ENCODE measurements at regions of chr22 and their contacts with region 1.

Region 1: DNA sequence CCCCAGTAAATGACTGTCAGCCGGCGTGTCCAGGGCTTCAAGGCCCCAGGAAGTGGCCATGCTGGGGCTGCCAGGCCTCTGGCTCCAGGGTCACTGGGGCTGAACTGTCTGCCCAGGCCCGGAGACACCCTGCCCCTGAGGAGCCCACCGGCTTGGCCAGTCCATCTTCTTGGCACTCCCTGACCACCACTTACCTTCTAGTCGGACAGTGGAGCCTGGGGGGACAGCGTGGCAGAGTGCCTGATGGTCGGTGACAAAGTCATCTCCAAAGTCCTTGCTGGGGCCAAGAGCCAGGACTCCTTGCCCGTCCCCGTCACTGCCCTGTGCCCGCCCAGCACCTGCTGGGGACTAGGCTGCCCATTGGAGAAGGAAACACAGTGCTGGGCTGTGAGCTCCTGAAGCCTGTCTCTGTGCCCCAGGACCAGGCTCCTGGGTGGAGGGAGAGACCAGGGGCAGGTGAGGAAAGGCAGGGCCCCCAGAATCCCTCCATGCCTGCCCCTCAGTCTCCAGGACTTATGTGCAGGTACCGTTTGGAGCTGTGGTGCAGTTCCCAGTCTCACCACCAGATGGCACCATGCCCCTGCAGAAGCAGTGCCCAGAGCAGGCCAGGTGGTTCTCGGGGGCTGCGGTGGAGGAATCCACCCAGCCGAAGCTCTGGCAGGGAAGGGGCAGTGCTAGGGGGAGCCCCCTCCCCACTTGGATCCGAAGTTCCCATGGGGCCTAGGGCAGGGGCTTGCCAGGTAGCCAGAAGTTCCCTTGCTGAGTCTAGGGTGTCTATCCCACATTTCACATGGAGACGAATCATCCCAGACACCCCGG is 6.0 kb upstream of the CCDC188 start:
- DNase-seq: peak; percentile 52
- ATAC-seq: peak; percentile 85
- H3K4me3 ChIP-seq: no peak overlapping the region
- H3K27ac ChIP-seq: no peak overlapping the region
- H3K4me1 ChIP-seq: no peaks in the 10 kb centered on the region
- H3K27me3 ChIP-seq: no peaks in the 10 kb centered on the region
- CTCF ChIP-seq: peak; percentile 94 to 98 (median 98)
- POLR2A ChIP-seq: no peak
- RAD21 ChIP-seq: peak; percentile 99

Region 2: GRCh38 chr22:19738664-19739447 is 418.0 kb before region 1 on chr22:
- CTCF ChIA-PET with region 1: no interaction called
- POLR2A ChIA-PET with region 1: no interaction called
- RAD21 ChIA-PET with region 1: no interaction called
- intact Hi-C with region 1: no loop called
- DNase-seq: no peak
- ATAC-seq: no peak
- H3K4me3 ChIP-seq: no peak overlapping the region
- H3K27ac ChIP-seq: no peak overlapping the region
- H3K4me1 ChIP-seq: no peaks in the 10 kb centered on the region
- H3K27me3 ChIP-seq: no peaks in the 10 kb centered on the region
- CTCF ChIP-seq: no peak
- POLR2A ChIP-seq: no peak
- RAD21 ChIP-seq: no peak

Region 3: GRCh38 chr22:20174785-20175596 is 18.2 kb after region 1 on chr22:
- CTCF ChIA-PET with region 1: no interaction called
- POLR2A ChIA-PET with region 1: no interaction called
- RAD21 ChIA-PET with region 1: no interaction called
- intact Hi-C with region 1: no loop called
- DNase-seq: no peak
- ATAC-seq: peak; percentile 76
- H3K4me3 ChIP-seq: no peak overlapping the region
- H3K27ac ChIP-seq: no peak overlapping the region
- H3K4me1 ChIP-seq: no peaks in the 10 kb centered on the region; a peak in 1 of 4 replicates
- H3K27me3 ChIP-seq: no peaks in the 10 kb centered on the region
- CTCF ChIP-seq: peak; percentile 34 to 38 (median 37); a peak in 4 of 6 replicates
- POLR2A ChIP-seq: no peak
- RAD21 ChIP-seq: peak; percentile 59

Region 4: GRCh38 chr22:20238536-20238900 is 81.7 kb after region 1 on chr22:
- CTCF ChIA-PET with region 1: interaction called, 20 read pairs
- POLR2A ChIA-PET with region 1: no interaction called
- RAD21 ChIA-PET with region 1: interaction called, 8 read pairs
- intact Hi-C with region 1: loop called (anchors 1 kb)
- DNase-seq: peak; percentile 13
- ATAC-seq: peak; percentile 96
- H3K4me3 ChIP-seq: no peak overlapping the region
- H3K27ac ChIP-seq: no peak overlapping the region
- H3K4me1 ChIP-seq: peaks cover 4% of the 10 kb centered on the region in 2 experiments; a peak in 3 of 4 replicates
- H3K27me3 ChIP-seq: no peaks in the 10 kb centered on the region
- CTCF ChIP-seq: peak; percentile 66 to 81 (median 77); a peak in 5 of 6 replicates
- POLR2A ChIP-seq: no peak
- RAD21 ChIP-seq: peak; percentile 86

Region 5: DNA sequence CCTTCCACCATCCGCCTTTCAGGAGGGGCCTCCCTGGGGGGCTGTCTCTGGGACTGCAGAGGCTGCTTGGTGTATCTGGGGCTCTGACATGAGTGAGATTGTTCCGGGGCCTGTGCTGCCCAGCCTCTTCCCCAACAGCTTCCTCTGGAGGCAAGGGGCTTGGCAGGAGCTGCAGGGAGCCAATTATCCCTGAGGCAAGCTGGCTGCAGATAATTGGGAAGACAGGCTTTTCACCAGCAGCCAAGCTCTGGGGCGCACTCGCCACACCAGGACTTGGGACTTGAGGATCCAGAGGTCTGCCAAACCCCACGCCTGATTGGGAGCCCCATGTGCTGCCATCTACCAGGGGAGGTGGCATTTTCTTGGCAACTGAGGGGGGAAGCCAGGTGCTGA is 126.8 kb after region 1 on chr22:
- CTCF ChIA-PET with region 1: interaction called, 13 read pairs
- POLR2A ChIA-PET with region 1: no interaction called
- RAD21 ChIA-PET with region 1: interaction called in 1 of 2 experiments, 6 read pairs
- intact Hi-C with region 1: loop called (anchors 1 kb)
- DNase-seq: no peak
- ATAC-seq: no peak
- H3K4me3 ChIP-seq: no peak overlapping the region
- H3K27ac ChIP-seq: no peak overlapping the region
- H3K4me1 ChIP-seq: peaks cover 0 to 6% of the 10 kb centered on the region in 2 experiments; a peak in 2 of 4 replicates
- H3K27me3 ChIP-seq: no peaks in the 10 kb centered on the region
- CTCF ChIP-seq: no peak
- POLR2A ChIP-seq: no peak
- RAD21 ChIP-seq: no peak

Region 6: GRCh38 chr22:20456064-20456721 is 299.4 kb after region 1 on chr22:
- CTCF ChIA-PET with region 1: interaction called, 4 read pairs
- POLR2A ChIA-PET with region 1: no interaction called
- RAD21 ChIA-PET with region 1: no interaction called
- intact Hi-C with region 1: loop called (anchors 5 kb)
- DNase-seq: peak; percentile 54
- ATAC-seq: peak; percentile 96
- H3K4me3 ChIP-seq: no peak overlapping the region
- H3K27ac ChIP-seq: no peak overlapping the region
- H3K4me1 ChIP-seq: peaks cover 0 to 3% of the 10 kb centered on the region in 2 experiments; a peak in 1 of 4 replicates
- H3K27me3 ChIP-seq: no peaks in the 10 kb centered on the region
- CTCF ChIP-seq: peak; percentile 78 to 92 (median 91)
- POLR2A ChIP-seq: no peak
- RAD21 ChIP-seq: peak; percentile 84

Measured in HCT116 (cell line).